ENCODE measurements at regions of chr7 and their contacts with region 1.

Region 1: GRCh38 chr7:42931834-42932651 is at the starts of genes MRPL32 and PSMA2:
- DNase-seq: peak; percentile 98
- H3K4me3 Mint-ChIP-seq: peak within 1 kb of the TSS; percentile 100
- H3K27ac Mint-ChIP-seq: peak within 1 kb of the TSS; percentile 99
- H3K4me1 Mint-ChIP-seq: peaks cover 26% of the 10 kb centered on the region
- H3K27me3 Mint-ChIP-seq: no peaks in the 10 kb centered on the region
- CTCF ChIP-seq: no peak
- total RNA-seq, gene MRPL32: 69.8 and 82.0 TPM in 2 replicates
- total RNA-seq, gene PSMA2: 65.5 and 73.8 TPM in 2 replicates

Region 2: GRCh38 chr7:42911454-42912447 is 20.3 kb before region 1 on chr7 and contains the start of gene C7orf25:
- CTCF ChIA-PET with region 1: interaction called, 3 read pairs
- POLR2A ChIA-PET with region 1: interaction called, 200 read pairs
- intact Hi-C with region 1: no loop called
- DNase-seq: peak; percentile 94
- H3K4me3 Mint-ChIP-seq: peak within 1 kb of the TSS; percentile 74
- H3K27ac Mint-ChIP-seq: peak within 1 kb of the TSS; percentile 79
- H3K4me1 Mint-ChIP-seq: peaks cover 55% of the 10 kb centered on the region
- H3K27me3 Mint-ChIP-seq: no peaks in the 10 kb centered on the region
- CTCF ChIP-seq: no peak
- total RNA-seq, gene C7orf25: 4.4 and 5.4 TPM in 2 replicates

Region 3: GRCh38 chr7:42956062-42956461 is 24.0 kb after region 1 on chr7:
- CTCF ChIA-PET with region 1: no interaction called
- POLR2A ChIA-PET with region 1: no interaction called
- intact Hi-C with region 1: no loop called
- DNase-seq: no peak
- H3K4me3 Mint-ChIP-seq: no peak overlapping the region
- H3K27ac Mint-ChIP-seq: no peak overlapping the region
- H3K4me1 Mint-ChIP-seq: no peaks in the 10 kb centered on the region
- H3K27me3 Mint-ChIP-seq: no peaks in the 10 kb centered on the region
- CTCF ChIP-seq: no peak

Region 4: GRCh38 chr7:43294080-43294630 is 362.1 kb after region 1 on chr7:
- CTCF ChIA-PET with region 1: interaction called, 4 read pairs
- POLR2A ChIA-PET with region 1: interaction called, 10 read pairs
- intact Hi-C with region 1: no loop called
- DNase-seq: peak; percentile 95
- H3K4me3 Mint-ChIP-seq: no peak overlapping the region
- H3K27ac Mint-ChIP-seq: no peak overlapping the region
- H3K4me1 Mint-ChIP-seq: peaks cover 7% of the 10 kb centered on the region
- H3K27me3 Mint-ChIP-seq: no peaks in the 10 kb centered on the region
- CTCF ChIP-seq: no peak

Region 5: DNA sequence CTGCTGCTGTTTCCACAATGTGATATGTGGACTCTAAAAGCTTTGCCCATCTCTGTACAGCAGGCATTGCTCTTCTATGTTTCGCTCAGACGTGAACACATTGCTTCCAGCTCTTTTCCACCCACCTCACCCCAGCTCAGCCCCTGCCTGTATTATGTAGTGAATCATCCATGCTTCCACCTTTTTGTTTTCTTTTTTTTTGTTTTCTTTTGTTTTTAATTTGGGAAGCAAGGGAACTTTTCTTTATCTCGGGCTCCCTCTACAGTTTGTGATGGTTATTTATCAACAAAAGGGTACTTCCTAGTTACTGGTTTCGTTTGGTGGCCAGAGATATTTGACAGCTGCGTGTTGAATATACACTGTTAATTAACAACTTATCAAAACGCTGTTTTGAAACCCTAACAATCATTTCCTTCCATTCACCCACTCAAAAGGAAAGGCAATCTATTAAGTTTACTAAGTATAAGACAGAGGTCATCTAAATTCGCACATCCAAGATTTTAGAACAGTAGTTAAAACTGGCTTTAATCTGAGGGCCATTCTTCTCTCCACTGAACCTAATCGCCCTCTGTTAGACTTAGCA is 523.0 kb after region 1 on chr7:
- CTCF ChIA-PET with region 1: interaction called, 7 read pairs
- POLR2A ChIA-PET with region 1: interaction called, 8 read pairs
- intact Hi-C with region 1: loop called (anchors 2 kb)
- DNase-seq: peak; percentile 71
- H3K4me3 Mint-ChIP-seq: no peak overlapping the region
- H3K27ac Mint-ChIP-seq: no peak overlapping the region
- H3K4me1 Mint-ChIP-seq: peaks cover 6% of the 10 kb centered on the region
- H3K27me3 Mint-ChIP-seq: no peaks in the 10 kb centered on the region
- CTCF ChIP-seq: peak; percentile 48

Region 6: DNA sequence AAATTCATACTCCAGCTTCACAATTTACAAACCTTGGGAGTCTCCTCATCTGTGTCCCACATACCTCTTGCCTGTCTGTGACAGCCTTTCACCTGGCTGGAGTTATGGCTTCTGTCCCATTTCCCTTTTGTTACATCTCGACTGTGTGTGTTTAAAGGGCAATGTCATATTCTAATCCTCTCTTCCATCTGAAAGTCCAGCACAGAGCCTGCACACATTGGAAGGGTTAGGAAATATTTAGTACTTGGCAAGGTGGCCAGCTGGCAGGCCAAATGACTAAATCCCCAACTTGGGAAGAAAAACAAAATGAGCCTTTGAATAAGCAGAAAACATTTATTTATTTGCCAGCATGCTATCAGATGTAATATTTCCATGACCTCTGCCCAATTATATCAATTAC is 530.8 kb after region 1 on chr7:
- CTCF ChIA-PET with region 1: no interaction called
- POLR2A ChIA-PET with region 1: interaction called, 11 read pairs
- intact Hi-C with region 1: no loop called
- DNase-seq: peak; percentile 68
- H3K4me3 Mint-ChIP-seq: peak overlapping the region; percentile 53
- H3K27ac Mint-ChIP-seq: peak overlapping the region; percentile 76
- H3K4me1 Mint-ChIP-seq: peaks cover 39% of the 10 kb centered on the region
- H3K27me3 Mint-ChIP-seq: no peaks in the 10 kb centered on the region
- CTCF ChIP-seq: no peak

Region 7: GRCh38 chr7:43572516-43573049 is 640.5 kb after region 1 on chr7:
- CTCF ChIA-PET with region 1: interaction called, 4 read pairs
- POLR2A ChIA-PET with region 1: interaction called, 11 read pairs
- intact Hi-C with region 1: no loop called
- DNase-seq: peak; percentile 99
- H3K4me3 Mint-ChIP-seq: no peak overlapping the region
- H3K27ac Mint-ChIP-seq: peak overlapping the region; percentile 58
- H3K4me1 Mint-ChIP-seq: peaks cover 35% of the 10 kb centered on the region
- H3K27me3 Mint-ChIP-seq: no peaks in the 10 kb centered on the region
- CTCF ChIP-seq: no peak